ENCODE measurements at regions of chr15 and their contacts with region 1.

Region 1: DNA sequence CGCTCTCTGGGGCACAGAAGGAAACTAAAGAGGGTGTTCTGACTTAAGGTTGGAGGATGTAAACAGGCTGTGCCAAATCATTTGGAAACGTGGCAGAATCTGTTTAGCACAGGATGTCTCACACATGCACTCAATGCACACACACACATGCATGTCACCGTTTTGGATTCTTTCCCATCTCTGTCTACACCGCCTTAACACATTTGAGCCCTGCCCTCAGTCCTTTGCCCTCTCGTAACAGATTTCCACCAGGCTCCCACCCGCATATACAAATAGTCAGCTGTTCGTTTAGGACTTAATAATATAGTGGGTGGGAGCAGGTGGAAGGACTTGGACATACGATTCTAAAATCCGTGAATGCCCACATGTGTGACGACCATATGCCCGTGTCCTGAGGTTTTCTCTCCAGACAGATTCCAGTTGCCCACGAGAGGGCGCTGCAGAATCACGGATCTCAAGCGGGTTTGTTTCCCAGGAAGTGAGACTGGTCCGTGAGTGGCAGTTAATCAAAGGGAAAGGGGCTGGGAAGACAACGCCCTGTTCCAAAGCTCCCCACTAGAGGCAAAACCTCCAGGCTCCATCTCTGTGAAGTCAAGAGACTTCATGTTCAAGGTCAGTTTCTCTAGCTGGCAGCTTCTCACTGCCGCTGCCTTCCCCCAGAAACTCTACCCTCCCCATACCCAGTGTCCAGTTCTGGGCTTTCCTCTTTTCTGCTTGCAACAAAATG is 44.5 kb downstream of the NOX5 start:
- DNase-seq: peak; percentile 92
- ATAC-seq: peak; percentile 83
- H3K4me3 Mint-ChIP-seq: no peak overlapping the region
- H3K27ac Mint-ChIP-seq: no peak overlapping the region
- H3K4me1 Mint-ChIP-seq: peaks cover 15% of the 10 kb centered on the region
- H3K27me3 Mint-ChIP-seq: peaks cover 7% of the 10 kb centered on the region; the same call in 1 of the 2 replicates
- CTCF ChIP-seq: peak; percentile 80

Region 2: DNA sequence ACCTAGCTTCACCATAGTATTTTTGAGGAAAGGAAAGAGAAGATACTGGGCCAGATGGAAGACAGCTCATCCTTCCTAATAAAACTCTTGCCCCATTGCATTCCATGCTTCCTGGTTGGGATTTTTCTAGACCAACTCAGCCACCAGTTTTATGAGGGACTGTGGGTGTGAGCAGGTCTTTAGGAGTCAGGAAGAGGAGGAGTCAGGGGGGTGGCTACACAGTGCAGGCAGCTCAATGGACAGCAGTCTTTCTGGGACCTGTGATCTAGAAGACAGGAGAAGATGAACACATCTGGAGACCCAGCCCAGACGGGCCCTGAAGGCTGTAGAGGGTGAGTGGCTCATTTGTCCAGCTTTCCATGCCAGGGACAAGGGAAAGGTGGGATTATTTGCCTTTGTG is 44.5 kb before region 1 on chr15 and contains the start of gene NOX5:
- CTCF ChIA-PET with region 1: no interaction called
- POLR2A ChIA-PET with region 1: no interaction called
- DNase-seq: no peak
- ATAC-seq: no peak
- H3K4me3 Mint-ChIP-seq: no peak within 1 kb of the TSS
- H3K27ac Mint-ChIP-seq: no peak within 1 kb of the TSS
- H3K4me1 Mint-ChIP-seq: peaks cover 4% of the 10 kb centered on the region; the same call in 1 of the 2 replicates
- H3K27me3 Mint-ChIP-seq: peaks cover 10% of the 10 kb centered on the region
- CTCF ChIP-seq: no peak
- total RNA-seq, gene NOX5: not detected in 3 replicates

Region 3: GRCh38 chr15:69118089-69118488 is 59.1 kb after region 1 on chr15:
- CTCF ChIA-PET with region 1: interaction called, 12 read pairs
- POLR2A ChIA-PET with region 1: no interaction called
- DNase-seq: no peak
- ATAC-seq: no peak
- H3K4me3 Mint-ChIP-seq: peak overlapping the region; percentile 47
- H3K27ac Mint-ChIP-seq: no peak overlapping the region
- H3K4me1 Mint-ChIP-seq: peaks cover 74% of the 10 kb centered on the region
- H3K27me3 Mint-ChIP-seq: peaks cover 95% of the 10 kb centered on the region
- CTCF ChIP-seq: no peak

Region 4: GRCh38 chr15:69160141-69160993 is 101.4 kb after region 1 on chr15 and contains the start of gene GLCE:
- CTCF ChIA-PET with region 1: interaction called, 16 read pairs
- POLR2A ChIA-PET with region 1: no interaction called
- DNase-seq: peak; percentile 97
- ATAC-seq: peak; percentile 94
- H3K4me3 Mint-ChIP-seq: peak within 1 kb of the TSS; percentile 95
- H3K27ac Mint-ChIP-seq: peak within 1 kb of the TSS; percentile 93
- H3K4me1 Mint-ChIP-seq: peaks cover 25% of the 10 kb centered on the region
- H3K27me3 Mint-ChIP-seq: peaks cover 17% of the 10 kb centered on the region
- CTCF ChIP-seq: no peak
- total RNA-seq, gene GLCE: 10.7 to 12.5 TPM (median 11.3 TPM) in 3 replicates

Region 5: DNA sequence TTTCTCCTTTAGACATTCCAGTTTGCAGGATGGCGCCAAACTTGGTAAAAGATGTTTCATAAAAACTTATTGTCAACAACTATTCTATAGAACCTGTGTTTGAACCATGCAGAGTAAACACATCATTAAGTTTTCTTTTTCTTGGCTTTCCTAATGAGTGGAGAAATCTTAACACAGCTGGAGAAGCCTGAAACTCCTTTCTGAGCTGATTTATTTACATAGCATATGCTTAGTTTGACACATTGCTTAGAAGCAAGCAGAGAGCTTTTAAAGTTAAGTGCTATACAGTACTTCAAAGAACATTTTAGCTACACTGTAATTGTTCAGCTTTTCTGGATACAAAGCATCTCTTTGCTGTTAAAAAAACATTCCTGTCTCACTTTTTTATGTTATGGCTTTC is 178.7 kb after region 1 on chr15:
- CTCF ChIA-PET with region 1: interaction called, 10 read pairs
- POLR2A ChIA-PET with region 1: no interaction called
- DNase-seq: no peak
- ATAC-seq: no peak
- H3K4me3 Mint-ChIP-seq: no peak overlapping the region
- H3K27ac Mint-ChIP-seq: no peak overlapping the region
- H3K4me1 Mint-ChIP-seq: no peaks in the 10 kb centered on the region
- H3K27me3 Mint-ChIP-seq: no peaks in the 10 kb centered on the region
- CTCF ChIP-seq: no peak

Region 6: DNA sequence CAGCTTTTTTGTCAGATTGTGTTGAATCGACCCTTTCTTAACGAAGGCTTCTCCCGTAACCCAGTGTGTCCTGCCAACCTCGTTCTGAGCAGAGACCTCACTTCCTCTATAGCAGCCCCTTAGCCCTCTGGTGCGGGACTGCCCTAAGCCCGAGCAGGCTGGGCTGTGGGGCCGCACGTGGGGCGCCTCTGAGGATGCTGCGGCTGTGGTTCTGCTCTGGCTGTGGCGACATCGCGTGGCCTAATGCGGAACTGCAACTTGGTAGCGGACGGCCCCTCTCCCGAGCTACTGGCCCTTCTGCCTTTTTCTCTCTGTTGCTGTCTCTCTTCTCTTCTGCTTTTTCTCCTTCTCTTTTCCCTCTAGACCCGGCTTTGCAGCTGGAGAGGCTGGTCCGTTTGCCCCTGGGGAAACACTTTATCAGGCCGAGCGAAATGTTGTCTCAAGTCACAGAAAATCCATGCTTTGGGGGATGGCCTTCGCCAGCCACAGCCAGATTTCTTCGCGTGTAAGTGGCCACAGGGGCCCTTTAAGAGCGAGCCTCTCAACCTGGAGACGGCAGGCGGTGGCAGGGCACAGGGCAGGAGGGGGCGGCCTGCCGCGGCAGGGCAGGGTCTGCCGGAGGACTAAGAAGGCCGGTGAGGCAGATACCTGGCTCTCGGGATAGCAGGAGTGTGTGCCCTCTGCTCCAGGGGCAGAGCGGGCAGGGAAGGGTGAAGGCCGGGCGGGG is 335.7 kb after region 1 on chr15:
- CTCF ChIA-PET with region 1: interaction called, 15 read pairs
- POLR2A ChIA-PET with region 1: no interaction called
- DNase-seq: peak; percentile 97
- ATAC-seq: peak; percentile 96
- H3K4me3 Mint-ChIP-seq: peak overlapping the region; percentile 33; the same call in 1 of the 2 replicates
- H3K27ac Mint-ChIP-seq: no peak overlapping the region
- H3K4me1 Mint-ChIP-seq: peaks cover 20% of the 10 kb centered on the region
- H3K27me3 Mint-ChIP-seq: no peaks in the 10 kb centered on the region
- CTCF ChIP-seq: peak; percentile 93

Measured in WTC11 (cell line).